ENCODE measurements at regions of chr13 and their contacts with region 1.

Region 1: GRCh38 chr13:78121459-78122348 is 203.1 kb upstream of the EDNRB start:
- DNase-seq: peak; percentile 70
- ATAC-seq: peak; percentile 85
- H3K4me3 ChIP-seq: no peak overlapping the region
- H3K27ac ChIP-seq: no peak overlapping the region
- H3K4me1 ChIP-seq: no peaks in the 10 kb centered on the region
- H3K27me3 ChIP-seq: peaks cover 13% of the 10 kb centered on the region
- CTCF ChIP-seq: peak; percentile 77
- POLR2A ChIP-seq: no peak
- RAD21 ChIP-seq: peak; percentile 73

Region 2: GRCh38 chr13:77774181-77774580 is 347.5 kb before region 1 on chr13:
- CTCF ChIA-PET with region 1: interaction called, 5 read pairs
- POLR2A ChIA-PET with region 1: no interaction called
- dilution Hi-C with region 1: no loop called
- in situ Hi-C with region 1: loop called (anchors 5 kb)
- intact Hi-C with region 1: loop called (anchors 1 kb)
- DNase-seq: no peak
- ATAC-seq: no peak
- H3K4me3 ChIP-seq: no peak overlapping the region
- H3K27ac ChIP-seq: no peak overlapping the region
- H3K4me1 ChIP-seq: no peaks in the 10 kb centered on the region
- H3K27me3 ChIP-seq: peaks cover 5% of the 10 kb centered on the region
- CTCF ChIP-seq: no peak
- POLR2A ChIP-seq: no peak
- RAD21 ChIP-seq: no peak

Region 3: DNA sequence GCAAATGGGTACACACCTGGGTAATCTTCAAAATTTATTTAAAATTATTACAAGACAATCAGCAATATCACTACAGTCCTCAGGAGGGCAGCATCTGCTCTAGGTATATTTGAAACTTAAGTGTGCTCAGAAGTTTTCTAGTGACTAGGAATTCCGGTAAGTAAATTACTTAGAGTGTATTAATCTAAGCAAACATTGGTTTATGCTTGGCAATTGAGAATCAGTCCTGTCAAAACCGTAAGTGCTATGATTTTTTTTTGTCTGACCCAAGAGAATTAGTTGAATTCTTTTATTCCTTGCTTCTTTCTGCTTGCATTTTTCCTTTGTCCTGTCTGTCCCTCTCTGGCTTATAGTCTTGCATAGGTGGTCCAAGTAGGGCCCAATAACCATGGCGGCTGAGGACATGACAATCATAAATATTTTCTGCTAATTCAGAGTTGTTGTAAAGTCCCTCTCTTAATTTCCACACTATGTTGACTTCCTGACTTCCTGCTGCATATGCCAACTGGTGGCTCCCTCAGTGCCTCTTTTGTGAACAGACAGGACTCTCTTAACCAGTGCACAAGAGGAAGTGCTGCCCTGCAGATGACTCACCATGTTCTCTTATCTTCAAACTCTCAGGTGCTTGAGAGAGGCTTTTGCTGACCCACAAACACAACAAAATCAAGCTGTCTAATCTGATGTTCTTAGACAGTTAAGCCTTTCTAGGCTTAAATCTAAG is 342.0 kb before region 1 on chr13:
- CTCF ChIA-PET with region 1: interaction called, 8 read pairs
- POLR2A ChIA-PET with region 1: no interaction called
- dilution Hi-C with region 1: no loop called
- in situ Hi-C with region 1: loop called (anchors 5 kb)
- intact Hi-C with region 1: loop called (anchors 1 kb)
- DNase-seq: peak; percentile 74
- ATAC-seq: peak; percentile 94
- H3K4me3 ChIP-seq: no peak overlapping the region
- H3K27ac ChIP-seq: no peak overlapping the region
- H3K4me1 ChIP-seq: 0 out of 2 replicates have a peak, but pooled peaks cover 2% of the 10 kb centered on the region
- H3K27me3 ChIP-seq: peaks cover 2% of the 10 kb centered on the region; the same call in 1 of the 2 replicates
- CTCF ChIP-seq: peak; percentile 80
- POLR2A ChIP-seq: no peak
- RAD21 ChIP-seq: peak; percentile 79

Region 4: GRCh38 chr13:77789376-77789775 is 332.3 kb before region 1 on chr13:
- CTCF ChIA-PET with region 1: interaction called, 15 read pairs
- POLR2A ChIA-PET with region 1: no interaction called
- dilution Hi-C with region 1: no loop called
- in situ Hi-C with region 1: no loop called
- intact Hi-C with region 1: no loop called
- DNase-seq: no peak
- ATAC-seq: no peak
- H3K4me3 ChIP-seq: no peak overlapping the region
- H3K27ac ChIP-seq: no peak overlapping the region
- H3K4me1 ChIP-seq: peaks cover 7% of the 10 kb centered on the region; the same call in 1 of the 2 replicates
- H3K27me3 ChIP-seq: no peaks in the 10 kb centered on the region
- CTCF ChIP-seq: no peak
- POLR2A ChIP-seq: no peak
- RAD21 ChIP-seq: no peak

Region 5: GRCh38 chr13:77810430-77810829 is 311.3 kb before region 1 on chr13:
- CTCF ChIA-PET with region 1: interaction called, 14 read pairs
- POLR2A ChIA-PET with region 1: no interaction called
- dilution Hi-C with region 1: no loop called
- in situ Hi-C with region 1: no loop called
- intact Hi-C with region 1: loop called (anchors 1 kb)
- DNase-seq: peak; percentile 34
- ATAC-seq: peak; percentile 85
- H3K4me3 ChIP-seq: no peak overlapping the region
- H3K27ac ChIP-seq: no peak overlapping the region
- H3K4me1 ChIP-seq: no peaks in the 10 kb centered on the region
- H3K27me3 ChIP-seq: no peaks in the 10 kb centered on the region; the same call in 1 of the 2 replicates
- CTCF ChIP-seq: peak; percentile 39
- POLR2A ChIP-seq: no peak
- RAD21 ChIP-seq: no peak

Region 6: GRCh38 chr13:78759704-78760103 is 638.0 kb after region 1 on chr13:
- CTCF ChIA-PET with region 1: no interaction called
- POLR2A ChIA-PET with region 1: no interaction called
- dilution Hi-C with region 1: no loop called
- in situ Hi-C with region 1: no loop called
- intact Hi-C with region 1: no loop called
- DNase-seq: no peak
- ATAC-seq: no peak
- H3K4me3 ChIP-seq: no peak overlapping the region
- H3K27ac ChIP-seq: no peak overlapping the region
- H3K4me1 ChIP-seq: no peaks in the 10 kb centered on the region
- H3K27me3 ChIP-seq: no peaks in the 10 kb centered on the region
- CTCF ChIP-seq: no peak
- POLR2A ChIP-seq: no peak
- RAD21 ChIP-seq: no peak